GM12878 (cell line): ENCODE measurements at regions of chr3 and their contacts with region 1.

Region 1: GRCh38 chr3:116367761-116368395 is 77.4 kb downstream of the LSAMP start:
- DNase-seq: no peak
- ATAC-seq: no peak; the same call in 2 of the 3 replicates
- H3K4me3 ChIP-seq: no peak overlapping the region
- H3K27ac ChIP-seq: no peak overlapping the region
- H3K4me1 ChIP-seq: no peaks in the 10 kb centered on the region
- H3K27me3 ChIP-seq: no peaks in the 10 kb centered on the region
- CTCF ChIP-seq: no peak
- EP300 ChIP-seq: no peak
- POLR2A ChIP-seq: no peak
- RAD21 ChIP-seq: no peak

Region 2: DNA sequence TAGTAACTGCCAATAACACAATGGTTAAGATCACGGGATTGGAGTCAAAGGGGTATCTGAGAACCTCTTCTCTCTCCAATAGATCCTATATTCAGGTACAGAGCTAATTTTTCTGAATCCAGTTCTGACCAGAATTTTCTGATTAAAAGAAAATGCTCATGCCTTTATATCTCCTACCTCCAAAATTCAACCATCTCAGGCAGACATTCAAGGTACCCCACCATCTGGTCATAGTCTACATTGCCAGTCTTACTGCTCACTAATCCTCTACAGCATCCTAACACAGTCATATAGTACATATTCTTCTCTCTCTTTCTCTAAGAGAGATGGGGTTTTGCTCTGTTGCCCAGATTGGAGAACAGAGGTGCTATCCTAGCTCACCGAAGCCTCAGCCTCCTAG is 18.3 kb after region 1 on chr3:
- CTCF ChIA-PET with region 1: interaction called, 20 read pairs
- POLR2A ChIA-PET with region 1: no interaction called
- RAD21 ChIA-PET with region 1: no interaction called
- SMC1A ChIA-PET with region 1: interaction called, 8 read pairs
- in situ Hi-C with region 1: no loop called
- intact Hi-C with region 1: no loop called
- DNase-seq: no peak
- ATAC-seq: peak; percentile 46
- H3K4me3 ChIP-seq: no peak overlapping the region
- H3K27ac ChIP-seq: no peak overlapping the region
- H3K4me1 ChIP-seq: no peaks in the 10 kb centered on the region
- H3K27me3 ChIP-seq: no peaks in the 10 kb centered on the region
- CTCF ChIP-seq: no peak; a peak in 1 of 6 replicates
- EP300 ChIP-seq: no peak
- POLR2A ChIP-seq: no peak
- RAD21 ChIP-seq: 0 out of 2 replicates have a peak, but pooled peaks have one; percentile 18

Region 3: DNA sequence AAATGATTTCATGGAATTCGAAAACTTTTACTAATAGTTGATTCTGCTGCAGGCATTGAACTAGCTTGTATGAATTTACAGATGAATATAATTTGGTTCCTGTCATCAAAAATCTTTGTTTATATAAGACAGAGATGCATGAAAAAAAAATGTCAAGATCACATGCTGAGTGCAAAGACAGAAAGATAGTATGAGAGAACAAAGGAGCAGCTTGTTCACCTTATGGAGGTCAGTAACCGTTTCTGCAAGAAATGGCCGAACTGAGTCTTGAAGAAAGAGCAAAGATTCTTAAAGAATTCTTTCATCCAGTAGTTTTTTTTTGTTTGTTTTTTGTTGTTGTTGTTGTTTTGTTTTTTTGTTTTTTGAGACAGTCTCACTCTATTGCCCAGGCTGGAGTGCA is 792.3 kb after region 1 on chr3:
- CTCF ChIA-PET with region 1: no interaction called
- POLR2A ChIA-PET with region 1: no interaction called
- RAD21 ChIA-PET with region 1: no interaction called
- SMC1A ChIA-PET with region 1: no interaction called
- in situ Hi-C with region 1: no loop called
- intact Hi-C with region 1: no loop called
- DNase-seq: no peak
- ATAC-seq: no peak
- H3K4me3 ChIP-seq: no peak overlapping the region
- H3K27ac ChIP-seq: no peak overlapping the region
- H3K4me1 ChIP-seq: no peaks in the 10 kb centered on the region
- H3K27me3 ChIP-seq: no peaks in the 10 kb centered on the region
- CTCF ChIP-seq: no peak
- EP300 ChIP-seq: no peak
- POLR2A ChIP-seq: no peak
- RAD21 ChIP-seq: no peak